CD4-positive, alpha-beta memory T cell (primary cell): ENCODE measurements at regions of chr19 and their contacts with region 1.

Region 1: GRCh38 chr19:15432629-15433518 is 14.1 kb upstream of the AKAP8L start:
- DNase-seq: peak; percentile 91 to 92 (median 91)
- H3K4me3 ChIP-seq: peak overlapping the region; percentile 78 to 91
- H3K4me3 Mint-ChIP-seq: peak overlapping the region; percentile 87 to 95 (median 92)
- H3K27ac ChIP-seq: peak overlapping the region; percentile 61
- H3K27ac Mint-ChIP-seq: peak overlapping the region; percentile 87 to 99 (median 94)
- H3K4me1 ChIP-seq: peaks cover 31% of the 10 kb centered on the region
- H3K4me1 Mint-ChIP-seq: peaks cover 21 to 44% (median 27%) of the 10 kb centered on the region in 4 donors
- H3K27me3 ChIP-seq: no peaks in the 10 kb centered on the region
- H3K27me3 Mint-ChIP-seq: no peaks in the 10 kb centered on the region

Region 2: GRCh38 chr19:15154002-15154612 is 278.8 kb before region 1 on chr19:
- CTCF ChIA-PET with region 1: no interaction called
- POLR2A ChIA-PET with region 1: no interaction called
- intact Hi-C with region 1: no loop called
- DNase-seq: no peak
- H3K4me3 ChIP-seq: no peak overlapping the region
- H3K4me3 Mint-ChIP-seq: no peak overlapping the region
- H3K27ac ChIP-seq: no peak overlapping the region
- H3K27ac Mint-ChIP-seq: no peak overlapping the region
- H3K4me1 ChIP-seq: no peaks in the 10 kb centered on the region
- H3K4me1 Mint-ChIP-seq: peaks cover 0 to 5% (median 4%) of the 10 kb centered on the region in 4 donors
- H3K27me3 ChIP-seq: no peaks in the 10 kb centered on the region
- H3K27me3 Mint-ChIP-seq: peaks cover 14 to 21% of the 10 kb centered on the region in 2 donors

Region 3: DNA sequence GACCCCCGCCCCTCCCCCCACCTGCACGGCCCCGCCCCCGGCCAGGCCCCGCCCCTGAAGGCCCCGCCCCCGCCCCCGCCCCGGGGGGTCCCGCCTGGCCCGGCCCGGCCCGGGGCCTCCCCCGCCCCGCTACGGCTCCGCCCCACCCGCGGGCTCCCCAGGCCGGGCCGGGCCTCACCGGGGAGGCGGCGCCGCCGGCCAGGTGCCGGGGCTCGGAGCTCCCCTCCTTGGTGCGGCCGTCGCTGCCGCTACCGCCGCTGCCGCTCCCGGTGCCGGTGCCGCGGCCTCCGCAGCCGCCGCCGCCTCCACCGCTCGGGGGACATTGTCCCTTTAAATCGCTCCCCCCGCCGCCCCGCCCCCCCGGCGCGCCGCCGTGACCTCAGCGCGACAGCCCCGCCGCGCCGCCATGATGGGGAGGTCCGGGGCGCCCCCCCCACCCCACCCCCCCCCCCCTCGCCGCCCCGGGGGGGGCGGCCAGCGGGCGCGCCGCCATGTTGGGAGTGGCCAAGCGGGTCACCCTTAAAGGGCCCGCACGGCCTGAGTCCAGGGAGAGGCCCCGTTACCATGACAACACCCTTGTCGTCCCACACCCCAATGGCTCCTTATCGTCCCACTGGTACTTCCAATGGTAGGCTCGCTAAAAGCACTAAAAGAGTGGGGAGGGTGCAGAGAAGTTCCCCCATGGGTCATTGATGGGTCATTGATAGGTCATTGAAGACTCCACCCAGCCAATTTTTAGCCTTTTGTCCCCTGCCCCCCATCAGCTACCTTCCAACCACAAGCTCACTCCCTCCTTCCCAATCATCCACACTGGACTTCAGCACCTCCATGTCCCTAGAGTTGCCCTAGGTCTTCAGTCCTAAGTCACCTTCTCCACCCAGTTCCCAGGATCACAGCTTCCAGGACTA is 17.0 kb after region 1 on chr19 and contains the start of gene WIZ:
- CTCF ChIA-PET with region 1: interaction called, 3 read pairs
- POLR2A ChIA-PET with region 1: interaction called, 20 read pairs
- intact Hi-C with region 1: loop called (anchors 2 kb)
- DNase-seq: peak; percentile 83 to 90 (median 86)
- H3K4me3 ChIP-seq: peak within 1 kb of the TSS in 1 of 2 donors; percentile 63
- H3K4me3 Mint-ChIP-seq: peak within 1 kb of the TSS; percentile 79 to 91 (median 85)
- H3K27ac ChIP-seq: peak within 1 kb of the TSS; percentile 57
- H3K27ac Mint-ChIP-seq: peak within 1 kb of the TSS; percentile 89 to 98 (median 97)
- H3K4me1 ChIP-seq: peaks cover 21% of the 10 kb centered on the region
- H3K4me1 Mint-ChIP-seq: peaks cover 8 to 31% (median 24%) of the 10 kb centered on the region in 4 donors
- H3K27me3 ChIP-seq: no peaks in the 10 kb centered on the region
- H3K27me3 Mint-ChIP-seq: no peaks in the 10 kb centered on the region
- total RNA-seq, gene WIZ: 28.7 to 30.0 TPM

Region 4: GRCh38 chr19:15457701-15458484 is 25.0 kb after region 1 on chr19:
- CTCF ChIA-PET with region 1: interaction called, 11 read pairs
- POLR2A ChIA-PET with region 1: interaction called, 38 read pairs
- intact Hi-C with region 1: no loop called
- DNase-seq: no peak
- H3K4me3 ChIP-seq: no peak overlapping the region
- H3K4me3 Mint-ChIP-seq: no peak overlapping the region
- H3K27ac ChIP-seq: no peak overlapping the region
- H3K27ac Mint-ChIP-seq: peak overlapping the region in 4 of 7 donors; percentile 37 to 93 (median 48)
- H3K4me1 ChIP-seq: peaks cover 38% of the 10 kb centered on the region
- H3K4me1 Mint-ChIP-seq: peaks cover 9 to 45% (median 28%) of the 10 kb centered on the region in 4 donors
- H3K27me3 ChIP-seq: no peaks in the 10 kb centered on the region
- H3K27me3 Mint-ChIP-seq: no peaks in the 10 kb centered on the region

Region 5: GRCh38 chr19:15466851-15467733 is 34.2 kb after region 1 on chr19:
- CTCF ChIA-PET with region 1: interaction called, 11 read pairs
- POLR2A ChIA-PET with region 1: interaction called, 38 read pairs
- intact Hi-C with region 1: loop called (anchors 1 kb)
- DNase-seq: peak; percentile 56 to 89 (median 65)
- H3K4me3 ChIP-seq: no peak overlapping the region
- H3K4me3 Mint-ChIP-seq: peak overlapping the region; percentile 74 to 89 (median 78)
- H3K27ac ChIP-seq: peak overlapping the region; percentile 38
- H3K27ac Mint-ChIP-seq: peak overlapping the region; percentile 83 to 97 (median 91)
- H3K4me1 ChIP-seq: peaks cover 71% of the 10 kb centered on the region
- H3K4me1 Mint-ChIP-seq: peaks cover 38 to 74% (median 55%) of the 10 kb centered on the region in 4 donors
- H3K27me3 ChIP-seq: no peaks in the 10 kb centered on the region
- H3K27me3 Mint-ChIP-seq: no peaks in the 10 kb centered on the region

Region 6: GRCh38 chr19:15508035-15508710 is 75.3 kb after region 1 on chr19 and contains the start of gene CYP4F22:
- CTCF ChIA-PET with region 1: no interaction called
- POLR2A ChIA-PET with region 1: interaction called, 12 read pairs
- intact Hi-C with region 1: no loop called
- DNase-seq: peak in 2 of 5 donors; percentile 15 to 25
- H3K4me3 ChIP-seq: peak within 1 kb of the TSS in 1 of 2 donors; percentile 41
- H3K4me3 Mint-ChIP-seq: peak within 1 kb of the TSS; percentile 84 to 88 (median 86)
- H3K27ac ChIP-seq: no peak within 1 kb of the TSS
- H3K27ac Mint-ChIP-seq: peak within 1 kb of the TSS in 6 of 7 donors; percentile 5 to 78 (median 26)
- H3K4me1 ChIP-seq: peaks cover 16% of the 10 kb centered on the region
- H3K4me1 Mint-ChIP-seq: peaks cover 13 to 26% (median 18%) of the 10 kb centered on the region in 4 donors
- H3K27me3 ChIP-seq: peaks cover 5% of the 10 kb centered on the region
- H3K27me3 Mint-ChIP-seq: peaks cover 1 to 3% of the 10 kb centered on the region in 2 donors
- total RNA-seq, gene CYP4F22: 0.44 to 0.61 TPM